ENCODE measurements at regions of chr1 and their contacts with region 1.

Region 1: GRCh38 chr1:53945433-53946251 is at the start of gene IFT25:
- DNase-seq: peak; percentile 86
- H3K4me3 ChIP-seq: peak within 1 kb of the TSS; percentile 97
- H3K27ac ChIP-seq: peak within 1 kb of the TSS; percentile 70
- H3K27me3 ChIP-seq: no peaks in the 10 kb centered on the region
- CTCF ChIP-seq: no peak
- polyA plus RNA-seq, gene IFT25: 41.9 and 54.2 TPM in 2 replicates

Region 2: GRCh38 chr1:53878492-53879105 is 67.0 kb before region 1 on chr1:
- CTCF ChIA-PET with region 1: interaction called, 80 read pairs
- POLR2A ChIA-PET with region 1: no interaction called
- DNase-seq: peak; percentile 13
- H3K4me3 ChIP-seq: no peak overlapping the region
- H3K27ac ChIP-seq: no peak overlapping the region
- H3K27me3 ChIP-seq: no peaks in the 10 kb centered on the region
- CTCF ChIP-seq: peak; percentile 71

Region 3: GRCh38 chr1:53889304-53890298 is 56.0 kb before region 1 on chr1 and contains the start of gene YIPF1:
- CTCF ChIA-PET with region 1: interaction called, 5 read pairs
- POLR2A ChIA-PET with region 1: interaction called, 15 read pairs
- DNase-seq: peak; percentile 68
- H3K4me3 ChIP-seq: peak within 1 kb of the TSS; percentile 99
- H3K27ac ChIP-seq: peak within 1 kb of the TSS; percentile 73
- H3K27me3 ChIP-seq: no peaks in the 10 kb centered on the region
- CTCF ChIP-seq: no peak
- polyA plus RNA-seq, gene YIPF1: 48.5 and 52.4 TPM in 2 replicates

Region 4: DNA sequence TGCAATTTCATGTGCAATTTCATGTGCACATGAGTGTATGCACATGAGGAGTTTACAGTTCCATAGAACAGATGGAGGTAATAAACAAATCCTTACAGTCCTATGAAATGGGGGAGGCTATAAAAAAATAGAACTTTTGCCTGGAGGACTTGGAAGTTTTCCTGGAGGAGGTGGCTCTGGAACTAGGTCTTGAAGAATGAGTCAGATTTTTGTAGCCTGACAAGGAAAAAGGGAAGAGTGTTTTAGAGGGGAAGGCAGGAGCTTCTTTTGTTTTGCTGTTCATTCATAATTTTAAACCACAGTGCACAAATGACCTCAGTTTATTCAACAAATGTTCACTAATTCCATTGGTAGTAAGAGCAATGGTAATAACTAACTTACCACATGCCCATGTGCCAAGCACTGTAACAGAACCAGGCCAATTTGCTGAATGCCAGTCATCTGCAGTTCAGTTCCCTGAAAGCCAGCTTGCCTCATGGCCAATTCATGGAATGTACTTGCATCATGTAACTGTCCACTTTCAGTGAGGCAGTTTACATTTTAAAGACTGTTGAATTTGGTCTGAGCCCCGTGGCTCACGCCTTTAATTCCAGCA is 48.9 kb before region 1 on chr1:
- CTCF ChIA-PET with region 1: interaction called, 7 read pairs
- POLR2A ChIA-PET with region 1: interaction called, 11 read pairs
- DNase-seq: peak; percentile 74
- H3K4me3 ChIP-seq: no peak overlapping the region
- H3K27ac ChIP-seq: peak overlapping the region; percentile 83
- H3K27me3 ChIP-seq: no peaks in the 10 kb centered on the region
- CTCF ChIP-seq: no peak

Region 5: GRCh38 chr1:53959664-53960250 is 14.1 kb after region 1 on chr1:
- CTCF ChIA-PET with region 1: interaction called, 27 read pairs
- POLR2A ChIA-PET with region 1: interaction called, 8 read pairs
- DNase-seq: no peak
- H3K4me3 ChIP-seq: no peak overlapping the region
- H3K27ac ChIP-seq: no peak overlapping the region
- H3K27me3 ChIP-seq: no peaks in the 10 kb centered on the region
- CTCF ChIP-seq: peak; percentile 46

Measured in AG04450 (cell line).